Naive thymus-derived CD4-positive, alpha-beta T cell (primary cell): ENCODE measurements at regions of chr9 and their contacts with region 1.

Region 1: GRCh38 chr9:33623658-33624586 is 99.9 kb downstream of the ANKRD18B start:
- DNase-seq: peak; percentile 42 to 79 (median 72)
- ATAC-seq: peak; percentile 97
- H3K4me3 ChIP-seq: no peak overlapping the region
- H3K4me3 Mint-ChIP-seq: no peak overlapping the region
- H3K27ac ChIP-seq: no peak overlapping the region
- H3K27ac Mint-ChIP-seq: no peak overlapping the region
- H3K4me1 ChIP-seq: no peaks in the 10 kb centered on the region
- H3K4me1 Mint-ChIP-seq: peaks cover 3 to 7% (median 4%) of the 10 kb centered on the region in 7 donors
- H3K27me3 ChIP-seq: peaks cover 0 to 3% of the 10 kb centered on the region in 2 donors
- H3K27me3 Mint-ChIP-seq: peaks cover 22 to 37% (median 26%) of the 10 kb centered on the region in 5 donors

Region 2: GRCh38 chr9:33535541-33535940 is 88.4 kb before region 1 on chr9:
- CTCF ChIA-PET with region 1: no interaction called
- POLR2A ChIA-PET with region 1: no interaction called
- intact Hi-C with region 1: no loop called
- DNase-seq: no peak
- ATAC-seq: no peak
- H3K4me3 ChIP-seq: no peak overlapping the region
- H3K4me3 Mint-ChIP-seq: no peak overlapping the region
- H3K27ac ChIP-seq: no peak overlapping the region
- H3K27ac Mint-ChIP-seq: no peak overlapping the region
- H3K4me1 ChIP-seq: no peaks in the 10 kb centered on the region
- H3K4me1 Mint-ChIP-seq: no peaks in the 10 kb centered on the region
- H3K27me3 ChIP-seq: no peaks in the 10 kb centered on the region
- H3K27me3 Mint-ChIP-seq: peaks cover under 1 to 25% (median 9%) of the 10 kb centered on the region in 5 donors

Region 3: GRCh38 chr9:33638391-33638915 is 14.5 kb after region 1 on chr9:
- CTCF ChIA-PET with region 1: interaction called, 11 read pairs
- POLR2A ChIA-PET with region 1: no interaction called
- intact Hi-C with region 1: no loop called
- DNase-seq: no peak
- ATAC-seq: no peak
- H3K4me3 ChIP-seq: no peak overlapping the region
- H3K4me3 Mint-ChIP-seq: no peak overlapping the region
- H3K27ac ChIP-seq: no peak overlapping the region
- H3K27ac Mint-ChIP-seq: no peak overlapping the region
- H3K4me1 ChIP-seq: no peaks in the 10 kb centered on the region
- H3K4me1 Mint-ChIP-seq: no peaks in the 10 kb centered on the region
- H3K27me3 ChIP-seq: peaks cover 0 to 8% of the 10 kb centered on the region in 2 donors
- H3K27me3 Mint-ChIP-seq: peaks cover 68 to 80% (median 78%) of the 10 kb centered on the region in 5 donors

Region 4: GRCh38 chr9:33721674-33722358 is 97.9 kb after region 1 on chr9:
- CTCF ChIA-PET with region 1: interaction called, 76 read pairs
- POLR2A ChIA-PET with region 1: no interaction called
- intact Hi-C with region 1: loop called (anchors 1 kb)
- DNase-seq: peak; percentile 68 to 90 (median 86)
- ATAC-seq: peak; percentile 93
- H3K4me3 ChIP-seq: no peak overlapping the region
- H3K4me3 Mint-ChIP-seq: peak overlapping the region in 1 of 10 donors; percentile 32
- H3K27ac ChIP-seq: no peak overlapping the region
- H3K27ac Mint-ChIP-seq: peak overlapping the region in 3 of 9 donors; percentile 22 to 55 (median 49)
- H3K4me1 ChIP-seq: no peaks in the 10 kb centered on the region
- H3K4me1 Mint-ChIP-seq: peaks cover 0 to 4% (median 0%) of the 10 kb centered on the region in 7 donors
- H3K27me3 ChIP-seq: no peaks in the 10 kb centered on the region
- H3K27me3 Mint-ChIP-seq: peaks cover 5 to 27% (median 13%) of the 10 kb centered on the region in 5 donors

Region 5: DNA sequence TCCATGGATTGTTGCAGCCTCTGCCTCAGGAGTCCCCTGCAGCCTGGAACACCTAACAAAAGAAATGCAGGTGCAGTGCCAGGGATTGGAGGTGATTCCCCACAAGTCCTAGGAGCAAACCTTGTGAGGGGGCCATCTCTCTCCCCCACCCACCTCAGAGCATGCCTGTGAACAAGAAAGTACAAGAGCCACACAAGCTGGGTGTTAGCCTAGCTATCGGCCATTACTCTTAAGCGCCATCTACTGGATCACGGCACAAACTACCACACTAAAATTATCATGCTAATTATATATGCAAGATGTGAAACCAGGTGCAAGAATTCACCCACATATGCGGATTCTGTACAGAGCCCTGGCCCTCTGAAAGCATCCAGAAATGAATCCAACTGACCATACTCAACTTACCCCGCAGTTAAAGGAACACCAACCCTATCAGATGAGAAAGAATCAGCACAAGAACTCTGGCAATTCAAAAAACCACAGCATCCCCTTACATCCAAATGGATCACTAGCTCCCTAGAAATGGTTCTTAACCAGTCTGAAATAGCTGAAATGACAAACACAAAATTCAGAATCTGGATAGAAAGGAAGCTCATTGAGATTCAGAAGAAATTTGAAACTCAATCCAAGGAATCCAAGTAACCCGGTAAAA is 154.9 kb after region 1 on chr9:
- CTCF ChIA-PET with region 1: interaction called, 7 read pairs
- POLR2A ChIA-PET with region 1: no interaction called
- intact Hi-C with region 1: loop called (anchors 1 to 5 kb)
- DNase-seq: peak; percentile 11 to 61 (median 49)
- ATAC-seq: peak; percentile 87
- H3K4me3 ChIP-seq: no peak overlapping the region
- H3K4me3 Mint-ChIP-seq: no peak overlapping the region
- H3K27ac ChIP-seq: no peak overlapping the region
- H3K27ac Mint-ChIP-seq: no peak overlapping the region
- H3K4me1 ChIP-seq: no peaks in the 10 kb centered on the region
- H3K4me1 Mint-ChIP-seq: peaks cover 0 to 7% (median 0%) of the 10 kb centered on the region in 7 donors
- H3K27me3 ChIP-seq: no peaks in the 10 kb centered on the region
- H3K27me3 Mint-ChIP-seq: peaks cover under 1 to 34% (median 5%) of the 10 kb centered on the region in 5 donors